Activated naive CD8-positive, alpha-beta T cell treated with anti-CD3 and anti-CD28 coated beads, Interleukin-2, amount 10 ng/mL, durations not matched to agents 7 days and 5 days (primary cell): ENCODE measurements at regions of chr1 and their contacts with region 1.

Region 1: GRCh38 chr1:109548321-109549267 is at the start of gene GNAI3:
- DNase-seq: peak; percentile 93
- ATAC-seq: peak; percentile 96
- H3K4me3 Mint-ChIP-seq: peak within 1 kb of the TSS; percentile 95
- H3K27ac Mint-ChIP-seq: peak within 1 kb of the TSS; percentile 97
- H3K4me1 Mint-ChIP-seq: peaks cover 25% of the 10 kb centered on the region
- H3K27me3 Mint-ChIP-seq: no peaks in the 10 kb centered on the region
- total RNA-seq, gene GNAI3: 8.0 to 8.2 TPM

Region 2: DNA sequence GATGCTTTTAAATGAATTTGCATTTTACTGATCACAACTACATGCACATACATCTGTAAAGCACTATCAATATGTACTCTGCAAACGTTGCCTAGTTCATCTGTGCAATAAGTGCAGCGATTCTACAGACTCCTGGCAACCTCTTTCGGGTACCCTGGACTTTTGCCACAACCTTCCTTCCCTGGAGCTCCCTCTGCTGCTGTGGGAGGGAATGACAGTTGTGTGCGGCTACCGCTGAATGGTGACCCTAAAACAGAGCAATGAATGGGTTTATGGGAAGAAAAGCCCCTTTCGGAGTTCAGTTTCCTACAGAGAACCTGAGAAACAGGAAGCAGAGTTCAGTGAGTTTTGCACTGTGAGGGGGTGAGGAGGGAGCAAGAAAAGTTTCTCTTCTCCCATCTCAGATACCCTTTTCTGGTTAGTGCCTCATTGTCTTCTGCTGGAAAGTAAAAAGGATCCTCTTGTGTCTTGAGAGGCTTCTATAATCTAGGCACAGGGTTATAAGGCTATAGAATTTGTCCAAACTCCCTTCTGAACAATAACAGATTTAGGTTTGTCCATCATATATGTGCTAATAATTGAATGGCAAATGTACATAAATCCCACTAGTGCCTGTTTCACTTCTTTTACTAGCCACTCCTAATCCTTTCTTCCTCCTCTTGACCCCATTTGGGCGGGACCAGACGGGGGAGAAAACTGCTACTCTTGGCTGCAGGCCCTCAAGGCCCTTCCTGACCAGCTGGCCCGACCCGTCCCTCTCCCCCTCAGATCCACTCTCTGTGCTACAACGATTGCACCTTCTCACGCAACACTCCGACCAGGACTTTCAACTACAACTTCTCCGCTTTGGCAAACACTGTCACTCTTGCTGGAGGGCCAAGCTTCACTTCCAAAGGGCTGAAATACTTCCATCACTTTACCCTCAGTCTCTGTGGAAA is 354.7 kb before region 1 on chr1:
- POLR2A ChIA-PET with region 1: no interaction called
- DNase-seq: peak; percentile 76
- ATAC-seq: peak; percentile 78
- H3K4me3 Mint-ChIP-seq: no peak overlapping the region
- H3K27ac Mint-ChIP-seq: no peak overlapping the region
- H3K4me1 Mint-ChIP-seq: peaks cover 7% of the 10 kb centered on the region
- H3K27me3 Mint-ChIP-seq: no peaks in the 10 kb centered on the region

Region 3: DNA sequence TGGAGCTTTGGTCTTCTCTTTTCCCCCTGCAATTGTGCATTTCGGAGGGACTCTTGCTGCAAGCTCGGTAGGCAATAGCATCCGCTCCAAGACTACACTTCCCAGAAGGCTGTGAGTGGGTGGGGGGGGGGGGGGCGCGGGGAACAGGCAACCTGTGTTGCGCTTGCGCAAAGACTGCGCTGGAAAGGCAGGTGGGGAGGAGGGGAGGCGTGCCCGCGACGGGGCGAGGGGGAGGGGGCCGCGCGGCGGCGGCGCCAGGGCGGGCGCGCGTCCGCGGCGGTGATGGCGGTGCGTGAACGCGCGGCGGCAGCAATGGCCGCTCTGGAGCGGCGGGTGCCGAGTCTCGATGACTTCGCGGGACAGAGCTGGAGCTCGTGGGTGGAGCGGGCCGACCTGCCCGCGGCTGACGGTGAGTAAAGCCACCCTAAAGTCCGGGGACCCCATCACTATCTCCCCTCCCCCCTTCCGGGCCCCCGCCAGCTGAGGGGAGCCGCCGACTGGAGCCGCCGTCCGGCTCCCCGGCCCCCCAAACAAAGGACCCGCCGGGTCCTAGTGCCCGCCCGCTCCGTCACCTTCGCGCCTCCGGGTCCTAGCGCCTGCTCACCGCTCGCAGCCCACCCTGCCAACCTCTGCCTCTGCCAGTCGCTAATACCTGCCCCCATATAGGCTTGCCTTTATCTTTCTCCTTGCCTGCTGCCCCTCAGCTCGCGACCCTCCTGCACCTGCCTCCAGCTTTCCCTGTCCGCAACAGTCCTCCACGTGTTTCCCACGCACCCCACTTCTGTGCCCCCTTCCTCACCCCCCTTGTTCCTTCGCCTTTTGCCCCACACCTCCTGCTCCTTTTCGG is 64.7 kb before region 1 on chr1 and contains the start of gene ATXN7L2:
- POLR2A ChIA-PET with region 1: interaction called, 13 read pairs
- DNase-seq: peak; percentile 95
- ATAC-seq: peak; percentile 83
- H3K4me3 Mint-ChIP-seq: peak within 1 kb of the TSS; percentile 96
- H3K27ac Mint-ChIP-seq: peak within 1 kb of the TSS; percentile 93
- H3K4me1 Mint-ChIP-seq: peaks cover 28% of the 10 kb centered on the region
- H3K27me3 Mint-ChIP-seq: peaks cover 12% of the 10 kb centered on the region
- total RNA-seq, gene ATXN7L2: 10.4 to 12.4 TPM

Region 4: GRCh38 chr1:109610609-109611307 is 62.2 kb after region 1 on chr1:
- POLR2A ChIA-PET with region 1: interaction called, 22 read pairs
- DNase-seq: no peak
- ATAC-seq: no peak
- H3K4me3 Mint-ChIP-seq: no peak overlapping the region
- H3K27ac Mint-ChIP-seq: no peak overlapping the region
- H3K4me1 Mint-ChIP-seq: peaks cover 2% of the 10 kb centered on the region
- H3K27me3 Mint-ChIP-seq: peaks cover 9% of the 10 kb centered on the region

Region 5: GRCh38 chr1:109630081-109630897 is 81.7 kb after region 1 on chr1:
- POLR2A ChIA-PET with region 1: interaction called, 15 read pairs
- DNase-seq: no peak
- ATAC-seq: no peak
- H3K4me3 Mint-ChIP-seq: no peak overlapping the region
- H3K27ac Mint-ChIP-seq: no peak overlapping the region
- H3K4me1 Mint-ChIP-seq: peaks cover 19% of the 10 kb centered on the region
- H3K27me3 Mint-ChIP-seq: no peaks in the 10 kb centered on the region

Region 6: GRCh38 chr1:109773146-109773899 is 224.7 kb after region 1 on chr1:
- POLR2A ChIA-PET with region 1: interaction called, 11 read pairs
- DNase-seq: peak; percentile 65
- ATAC-seq: peak; percentile 87
- H3K4me3 Mint-ChIP-seq: no peak overlapping the region
- H3K27ac Mint-ChIP-seq: no peak overlapping the region
- H3K4me1 Mint-ChIP-seq: peaks cover 16% of the 10 kb centered on the region
- H3K27me3 Mint-ChIP-seq: peaks cover 3% of the 10 kb centered on the region

Region 7: GRCh38 chr1:109993885-109994284 is 445.3 kb after region 1 on chr1:
- POLR2A ChIA-PET with region 1: no interaction called
- DNase-seq: no peak
- ATAC-seq: no peak
- H3K4me3 Mint-ChIP-seq: no peak overlapping the region
- H3K27ac Mint-ChIP-seq: no peak overlapping the region
- H3K4me1 Mint-ChIP-seq: peaks cover 17% of the 10 kb centered on the region
- H3K27me3 Mint-ChIP-seq: no peaks in the 10 kb centered on the region